GM10248 (cell line): ENCODE measurements at regions of chr7 and their contacts with region 1.

Region 1: DNA sequence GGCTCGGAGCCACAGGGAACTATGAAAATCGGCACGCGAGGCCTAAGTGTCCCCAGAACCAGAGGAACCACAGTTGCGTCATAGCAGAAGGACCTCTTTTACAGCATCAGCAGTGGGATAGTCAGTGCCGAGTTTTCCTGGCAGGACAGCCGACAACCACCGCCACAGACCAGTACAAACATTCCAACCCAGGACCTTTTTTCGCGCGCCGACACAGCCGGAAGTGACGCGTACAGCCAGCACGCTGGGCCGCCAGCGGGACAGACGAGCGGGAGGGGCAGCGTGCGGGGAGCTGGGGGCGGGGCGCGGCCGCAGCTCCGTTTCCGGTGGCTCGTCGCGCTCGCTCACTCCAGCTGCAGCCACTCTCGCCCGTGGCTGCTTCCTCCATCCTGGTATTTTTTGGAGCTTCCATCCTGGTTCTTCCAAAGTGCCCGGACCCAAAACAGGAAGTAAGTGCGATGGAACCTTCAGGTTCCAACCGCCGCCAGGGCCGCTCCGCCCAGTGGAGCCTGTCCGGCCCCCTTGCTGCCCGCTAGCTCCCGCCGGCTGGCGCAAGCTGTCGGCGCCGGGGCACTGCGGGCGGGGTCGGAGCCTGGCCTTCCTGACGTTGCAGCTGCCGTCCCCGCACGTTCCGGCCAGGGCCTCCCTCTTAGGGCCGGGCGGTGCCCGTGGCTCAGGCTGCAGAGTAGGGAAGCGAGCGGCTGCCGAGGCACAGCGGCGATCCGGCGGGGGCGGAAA is at the start of gene DMTF1:
- DNase-seq: peak; percentile 93
- CTCF ChIP-seq: no peak

Region 2: DNA sequence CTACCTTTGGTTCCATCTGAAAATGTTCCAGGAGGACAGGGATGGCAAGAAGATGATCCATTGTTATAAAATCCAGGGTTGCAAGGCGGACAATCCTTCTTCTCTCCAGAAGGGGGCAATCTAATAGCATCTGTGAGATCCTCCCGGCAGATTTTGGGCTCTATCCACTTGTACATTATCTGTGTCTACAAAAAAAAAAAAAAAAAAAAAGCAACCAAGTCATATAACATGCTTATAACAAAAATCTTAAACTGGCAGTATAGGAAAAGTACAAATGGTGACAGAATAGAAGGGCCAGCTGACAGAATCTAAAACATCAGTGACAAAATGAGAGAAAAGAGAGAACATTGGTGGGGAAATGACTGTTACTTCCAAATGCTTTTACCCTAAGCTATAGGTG is 225.5 kb before region 1 on chr7:
- CTCF ChIA-PET with region 1: interaction called, 130 read pairs
- POLR2A ChIA-PET with region 1: no interaction called
- DNase-seq: peak; percentile 19
- CTCF ChIP-seq: peak; percentile 63

Region 3: DNA sequence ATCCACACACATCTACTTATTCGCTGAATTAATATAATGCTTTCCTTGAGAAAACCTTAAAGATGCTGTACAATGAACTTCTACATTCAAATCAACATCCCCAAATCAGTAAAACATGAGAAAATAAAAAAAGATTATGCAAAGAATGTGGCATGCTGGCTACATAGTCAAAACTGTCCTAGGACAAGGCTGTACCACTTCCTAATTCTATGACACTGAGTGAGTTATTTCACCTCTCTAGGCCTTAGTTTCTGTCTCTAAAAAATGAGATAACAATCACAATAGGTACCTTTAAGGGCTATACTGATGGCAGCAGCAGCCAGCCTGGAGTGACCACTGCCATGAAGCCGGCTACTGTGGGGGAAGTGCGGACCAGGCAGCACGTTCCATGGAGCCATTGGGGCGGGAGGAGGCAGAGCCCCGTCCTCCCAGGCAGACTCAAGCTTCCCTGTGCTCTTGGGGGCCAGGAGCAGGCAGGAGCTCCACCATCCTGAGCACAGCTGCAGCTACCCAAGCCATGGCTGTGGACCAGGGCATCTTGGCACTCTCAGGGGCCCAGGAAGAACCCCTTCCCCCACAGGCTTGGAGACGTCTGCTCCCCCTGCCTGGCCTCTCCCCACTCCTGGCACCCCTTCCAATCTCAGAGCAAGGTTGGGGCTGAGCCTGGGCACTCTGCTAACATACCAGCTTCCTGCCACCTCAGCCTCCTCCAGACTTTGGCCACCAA is 203.1 kb before region 1 on chr7:
- CTCF ChIA-PET with region 1: interaction called, 52 read pairs
- POLR2A ChIA-PET with region 1: interaction called, 5 read pairs
- DNase-seq: peak; percentile 56
- CTCF ChIP-seq: no peak

Region 4: GRCh38 chr7:87059525-87060287 is 92.6 kb before region 1 on chr7 and contains the start of gene ELAPOR2:
- CTCF ChIA-PET with region 1: interaction called, 52 read pairs
- POLR2A ChIA-PET with region 1: no interaction called
- DNase-seq: peak; percentile 91
- CTCF ChIP-seq: peak; percentile 72

Region 5: DNA sequence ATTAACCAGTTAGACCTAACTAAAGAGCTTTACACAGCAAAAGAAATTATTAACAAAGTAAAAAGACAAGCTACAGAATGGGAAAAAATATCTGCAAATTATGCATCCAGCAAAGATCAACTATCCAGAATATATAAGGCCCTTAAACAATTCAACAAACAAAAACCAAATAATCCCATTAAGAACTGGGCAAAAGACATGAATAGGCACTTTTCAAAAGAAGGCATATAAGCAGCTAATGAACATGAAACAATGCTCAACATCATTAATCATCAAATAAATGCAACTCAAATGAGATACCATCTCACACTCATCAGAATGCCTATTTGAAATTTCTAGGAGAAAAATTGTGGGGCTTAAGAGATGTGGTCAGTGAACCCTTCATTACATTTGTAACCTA is 15.0 kb before region 1 on chr7:
- CTCF ChIA-PET with region 1: interaction called, 52 read pairs
- POLR2A ChIA-PET with region 1: no interaction called
- DNase-seq: no peak
- CTCF ChIP-seq: no peak

Region 6: DNA sequence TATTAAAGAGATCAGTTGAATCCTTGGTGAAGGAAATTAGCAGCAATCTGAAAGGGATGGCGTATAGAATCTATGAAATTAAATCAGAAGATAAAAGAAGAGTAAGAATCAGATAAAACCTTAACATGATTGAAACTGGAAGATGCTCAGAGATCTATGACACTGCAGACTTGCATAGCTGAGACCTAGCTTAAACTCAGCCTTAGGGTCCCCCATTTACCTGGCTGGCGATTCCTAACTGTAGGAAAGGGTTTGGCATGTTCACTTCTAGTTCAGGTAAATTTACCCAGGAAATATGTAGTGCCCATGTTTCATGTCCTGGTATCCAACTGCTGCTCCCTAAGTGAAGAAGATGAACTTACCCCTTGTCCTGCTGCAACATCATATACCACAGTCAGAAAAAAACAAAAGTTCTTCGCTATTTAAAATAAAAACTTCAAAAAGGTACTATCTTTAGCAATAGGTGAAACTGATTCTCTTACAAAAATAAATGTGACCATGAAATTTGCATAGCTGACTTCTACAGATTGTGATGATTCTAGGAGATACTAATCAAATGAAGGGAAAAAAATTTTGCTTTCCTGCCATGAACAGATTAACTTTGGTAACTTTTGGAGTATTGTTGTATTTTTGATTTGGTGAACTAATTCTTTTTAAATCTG is 115.1 kb after region 1 on chr7:
- CTCF ChIA-PET with region 1: no interaction called
- POLR2A ChIA-PET with region 1: no interaction called
- DNase-seq: no peak
- CTCF ChIP-seq: no peak